Activated naive CD4-positive, alpha-beta T cell treated with anti-CD3 and anti-CD28 coated beads for 36 hours (primary cell): ENCODE measurements at regions of chr20 and their contacts with region 1.

Region 1: GRCh38 chr20:34190679-34191090 is 50.5 kb upstream of the ASIP start:
- DNase-seq: peak; percentile 71
- H3K4me3 Mint-ChIP-seq: no peak overlapping the region
- H3K27ac Mint-ChIP-seq: no peak overlapping the region
- H3K4me1 Mint-ChIP-seq: no peaks in the 10 kb centered on the region
- H3K27me3 Mint-ChIP-seq: peaks cover 3% of the 10 kb centered on the region

Region 2: DNA sequence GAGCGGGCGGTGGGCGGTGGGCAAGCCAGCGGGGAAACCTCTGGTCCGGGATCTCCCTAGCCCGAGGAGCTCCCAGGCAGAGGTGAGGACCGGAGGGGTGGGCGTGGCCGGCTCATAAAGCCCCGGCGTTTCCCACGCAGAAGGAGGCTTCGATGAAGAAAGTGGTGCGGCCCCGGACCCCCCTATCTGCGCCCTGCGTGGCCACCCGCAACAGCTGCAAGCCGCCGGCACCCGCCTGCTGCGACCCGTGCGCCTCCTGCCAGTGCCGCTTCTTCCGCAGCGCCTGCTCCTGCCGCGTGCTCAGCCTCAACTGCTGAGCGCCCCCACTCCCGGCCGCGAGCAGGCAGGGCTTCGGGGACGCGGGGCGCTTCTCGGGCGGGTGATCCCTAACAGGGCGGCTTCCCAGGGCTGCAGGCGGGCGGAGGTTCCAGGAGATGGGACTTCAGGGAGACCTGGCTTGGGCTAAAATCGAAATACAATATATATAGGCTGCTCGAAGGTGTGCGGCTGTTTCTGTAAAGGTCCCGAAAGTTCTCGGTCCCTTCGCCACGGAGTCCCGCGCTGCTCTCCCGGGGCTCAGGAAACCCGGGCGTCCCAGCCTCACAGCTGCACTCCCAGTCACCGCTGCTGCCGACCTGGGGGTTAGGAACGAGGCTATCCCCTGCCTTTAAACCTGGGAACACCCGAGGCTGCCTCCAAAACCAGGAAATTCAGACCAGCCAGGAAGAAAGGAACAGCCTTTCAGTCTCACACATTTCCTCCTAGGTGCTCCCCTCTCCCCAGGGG is 78.4 kb after region 1 on chr20:
- CTCF ChIA-PET with region 1: interaction called, 10 read pairs
- intact Hi-C with region 1: loop called (anchors 10 kb)
- DNase-seq: peak; percentile 20
- H3K4me3 Mint-ChIP-seq: peak overlapping the region; percentile 27
- H3K27ac Mint-ChIP-seq: no peak overlapping the region
- H3K4me1 Mint-ChIP-seq: peaks cover 5% of the 10 kb centered on the region
- H3K27me3 Mint-ChIP-seq: peaks cover 5% of the 10 kb centered on the region

Region 3: DNA sequence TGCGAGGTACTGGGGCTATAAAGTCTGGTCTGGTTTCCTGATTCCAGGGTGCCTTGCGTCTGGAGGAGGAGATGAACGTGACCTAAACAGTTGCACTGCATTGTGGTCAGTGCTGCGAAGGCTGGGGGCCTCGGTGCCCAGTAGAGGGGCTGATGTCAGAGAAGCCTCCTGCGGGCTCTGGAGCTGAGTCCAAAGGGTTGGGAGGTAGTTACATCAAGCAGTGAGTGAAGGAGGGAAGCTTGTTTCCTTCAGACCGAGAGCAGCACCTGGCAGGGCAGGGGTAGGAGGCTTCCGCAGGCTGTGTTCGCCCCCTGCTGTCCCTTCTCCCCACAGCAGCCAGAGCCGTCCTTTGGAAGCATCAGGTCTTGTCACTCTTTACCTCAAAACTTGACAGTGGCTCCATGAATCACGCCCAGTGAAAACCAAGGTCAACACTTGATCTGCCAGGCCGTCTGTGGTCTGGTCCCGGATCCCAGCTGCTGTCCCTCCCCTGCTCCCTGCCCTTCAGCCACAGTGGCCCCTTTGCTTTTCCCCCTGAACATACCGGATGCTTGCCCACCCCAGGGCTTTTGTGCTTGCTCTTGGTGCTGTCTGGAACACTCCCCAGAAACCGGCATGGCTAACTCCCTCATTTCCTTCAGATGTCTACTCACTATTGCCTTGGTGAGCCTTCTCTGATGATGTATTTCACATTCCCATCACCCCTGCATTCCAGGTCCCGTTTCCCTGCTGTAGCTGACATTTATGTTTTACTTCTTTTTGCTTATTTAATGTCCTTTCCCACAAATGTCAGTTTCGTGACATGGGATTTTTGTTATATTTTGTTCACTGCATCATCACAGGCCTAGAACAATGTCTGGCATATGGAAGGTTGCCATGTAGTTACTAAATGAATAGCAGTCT is 332.5 kb after region 1 on chr20:
- CTCF ChIA-PET with region 1: interaction called, 10 read pairs
- intact Hi-C with region 1: loop called (anchors 2 kb)
- DNase-seq: peak; percentile 74
- H3K4me3 Mint-ChIP-seq: no peak overlapping the region
- H3K27ac Mint-ChIP-seq: no peak overlapping the region
- H3K4me1 Mint-ChIP-seq: peaks cover 42% of the 10 kb centered on the region
- H3K27me3 Mint-ChIP-seq: no peaks in the 10 kb centered on the region